Caco-2 (cell line): ENCODE measurements at regions of chr4 and their contacts with region 1.

Region 1: GRCh38 chr4:138522366-138522765 is 280.2 kb upstream of the SLC7A11 start:
- DNase-seq: peak in 1 of 2 experiments; percentile 21
- H3K4me3 ChIP-seq: no peak overlapping the region
- H3K4me3 Mint-ChIP-seq: no peak overlapping the region
- H3K27ac Mint-ChIP-seq: no peak overlapping the region
- H3K4me1 ChIP-seq: no peaks in the 10 kb centered on the region
- H3K4me1 Mint-ChIP-seq: no peaks in the 10 kb centered on the region
- H3K27me3 ChIP-seq: no peaks in the 10 kb centered on the region
- H3K27me3 Mint-ChIP-seq: no peaks in the 10 kb centered on the region
- CTCF ChIP-seq: peak; percentile 34 to 35

Region 2: DNA sequence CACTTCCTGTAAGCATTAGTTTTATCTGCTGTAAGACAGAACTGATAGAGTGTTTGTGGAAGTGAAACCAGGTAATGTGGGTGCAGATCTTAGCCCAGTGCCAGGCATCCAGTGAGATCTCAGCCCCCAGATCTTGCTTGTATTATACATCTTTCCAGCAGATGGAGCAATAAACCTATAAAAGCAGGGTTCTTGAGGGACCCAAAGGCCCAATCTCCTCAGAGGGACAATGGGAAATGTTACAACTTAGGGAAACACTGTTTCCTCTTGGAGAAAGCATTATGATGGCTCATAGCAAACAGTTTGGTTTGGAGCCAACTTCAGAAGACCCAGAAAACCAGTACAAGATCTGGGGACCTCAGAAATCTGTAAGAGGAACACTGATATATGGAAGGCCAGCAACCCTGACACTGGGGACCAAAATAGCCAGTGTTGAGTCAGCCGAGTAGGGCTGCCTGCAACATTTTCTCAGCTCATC is 486.5 kb before region 1 on chr4:
- CTCF ChIA-PET with region 1: no interaction called
- POLR2A ChIA-PET with region 1: no interaction called
- intact Hi-C with region 1: loop called (anchors 1 kb)
- DNase-seq: peak in 1 of 2 experiments; percentile 56
- H3K4me3 ChIP-seq: no peak overlapping the region
- H3K4me3 Mint-ChIP-seq: no peak overlapping the region
- H3K27ac Mint-ChIP-seq: no peak overlapping the region
- H3K4me1 ChIP-seq: no peaks in the 10 kb centered on the region
- H3K4me1 Mint-ChIP-seq: peaks cover under 1% of the 10 kb centered on the region
- H3K27me3 ChIP-seq: no peaks in the 10 kb centered on the region
- H3K27me3 Mint-ChIP-seq: no peaks in the 10 kb centered on the region
- CTCF ChIP-seq: peak; percentile 58 to 67

Region 3: GRCh38 chr4:138222046-138222445 is 300.3 kb before region 1 on chr4:
- CTCF ChIA-PET with region 1: no interaction called
- POLR2A ChIA-PET with region 1: no interaction called
- intact Hi-C with region 1: loop called (anchors 5 kb)
- DNase-seq: no peak
- H3K4me3 ChIP-seq: no peak overlapping the region
- H3K4me3 Mint-ChIP-seq: no peak overlapping the region
- H3K27ac Mint-ChIP-seq: no peak overlapping the region
- H3K4me1 ChIP-seq: peaks cover 1% of the 10 kb centered on the region; the same call in 1 of the 2 replicates
- H3K4me1 Mint-ChIP-seq: peaks cover 8% of the 10 kb centered on the region
- H3K27me3 ChIP-seq: no peaks in the 10 kb centered on the region
- H3K27me3 Mint-ChIP-seq: no peaks in the 10 kb centered on the region
- CTCF ChIP-seq: no peak

Region 4: DNA sequence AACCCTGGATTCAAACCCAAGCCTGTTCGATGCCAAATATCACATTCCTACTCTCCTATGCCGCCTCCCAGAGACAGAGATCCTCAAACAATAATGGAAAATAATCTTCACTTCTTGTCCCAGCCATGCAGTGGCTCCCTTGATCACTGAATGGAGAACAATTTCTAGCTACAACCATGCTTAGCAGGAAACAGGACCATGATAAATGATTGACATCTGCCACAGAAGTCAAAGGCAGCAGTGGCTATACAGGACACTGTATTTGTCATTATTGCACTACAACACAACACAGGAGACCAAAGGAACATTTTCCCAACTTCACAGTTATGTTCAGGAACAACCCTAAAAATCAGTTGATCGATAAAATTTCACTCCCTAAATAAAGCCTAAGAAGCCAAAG is 36.9 kb before region 1 on chr4:
- CTCF ChIA-PET with region 1: no interaction called
- POLR2A ChIA-PET with region 1: no interaction called
- intact Hi-C with region 1: loop called (anchors 1 kb)
- DNase-seq: peak in 1 of 2 experiments; percentile 1
- H3K4me3 ChIP-seq: no peak overlapping the region
- H3K4me3 Mint-ChIP-seq: no peak overlapping the region
- H3K27ac Mint-ChIP-seq: no peak overlapping the region
- H3K4me1 ChIP-seq: no peaks in the 10 kb centered on the region
- H3K4me1 Mint-ChIP-seq: no peaks in the 10 kb centered on the region
- H3K27me3 ChIP-seq: no peaks in the 10 kb centered on the region
- H3K27me3 Mint-ChIP-seq: no peaks in the 10 kb centered on the region
- CTCF ChIP-seq: no peak

Region 5: DNA sequence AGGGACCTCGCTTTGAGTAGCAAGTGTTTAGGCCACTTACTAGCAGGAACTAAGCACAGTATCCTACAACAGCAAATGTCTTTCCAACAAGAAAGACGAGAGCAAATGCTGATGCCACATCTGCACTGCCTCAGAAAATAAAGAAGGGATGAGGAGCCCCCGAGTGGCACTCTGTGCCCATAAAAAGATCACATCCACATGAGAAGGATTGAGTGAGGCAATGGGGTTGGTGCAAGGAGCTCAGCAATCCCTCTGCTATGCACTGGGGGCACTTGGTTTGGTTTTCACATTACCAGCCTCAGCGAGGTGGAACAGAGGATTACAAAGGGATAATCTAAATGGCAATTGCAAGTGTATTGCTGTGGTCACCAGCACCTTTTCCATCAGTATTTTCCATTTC is 27.4 kb before region 1 on chr4:
- CTCF ChIA-PET with region 1: interaction called, 3 read pairs
- POLR2A ChIA-PET with region 1: no interaction called
- intact Hi-C with region 1: loop called (anchors 1 kb)
- DNase-seq: peak in 1 of 2 experiments; percentile 19
- H3K4me3 ChIP-seq: no peak overlapping the region
- H3K4me3 Mint-ChIP-seq: no peak overlapping the region
- H3K27ac Mint-ChIP-seq: no peak overlapping the region
- H3K4me1 ChIP-seq: no peaks in the 10 kb centered on the region
- H3K4me1 Mint-ChIP-seq: no peaks in the 10 kb centered on the region
- H3K27me3 ChIP-seq: no peaks in the 10 kb centered on the region
- H3K27me3 Mint-ChIP-seq: peaks cover 5% of the 10 kb centered on the region
- CTCF ChIP-seq: no peak

Region 6: GRCh38 chr4:138659812-138660316 is 137.5 kb after region 1 on chr4:
- CTCF ChIA-PET with region 1: no interaction called
- POLR2A ChIA-PET with region 1: no interaction called
- intact Hi-C with region 1: no loop called
- DNase-seq: no peak
- H3K4me3 ChIP-seq: no peak overlapping the region
- H3K4me3 Mint-ChIP-seq: no peak overlapping the region
- H3K27ac Mint-ChIP-seq: no peak overlapping the region
- H3K4me1 ChIP-seq: peaks cover 13% of the 10 kb centered on the region
- H3K4me1 Mint-ChIP-seq: peaks cover 6% of the 10 kb centered on the region
- H3K27me3 ChIP-seq: no peaks in the 10 kb centered on the region
- H3K27me3 Mint-ChIP-seq: no peaks in the 10 kb centered on the region
- CTCF ChIP-seq: no peak